Posterior cingulate gyrus (tissue), 11 donors: ENCODE measurements at regions of chr7 and their contacts with region 1.

Region 1: DNA sequence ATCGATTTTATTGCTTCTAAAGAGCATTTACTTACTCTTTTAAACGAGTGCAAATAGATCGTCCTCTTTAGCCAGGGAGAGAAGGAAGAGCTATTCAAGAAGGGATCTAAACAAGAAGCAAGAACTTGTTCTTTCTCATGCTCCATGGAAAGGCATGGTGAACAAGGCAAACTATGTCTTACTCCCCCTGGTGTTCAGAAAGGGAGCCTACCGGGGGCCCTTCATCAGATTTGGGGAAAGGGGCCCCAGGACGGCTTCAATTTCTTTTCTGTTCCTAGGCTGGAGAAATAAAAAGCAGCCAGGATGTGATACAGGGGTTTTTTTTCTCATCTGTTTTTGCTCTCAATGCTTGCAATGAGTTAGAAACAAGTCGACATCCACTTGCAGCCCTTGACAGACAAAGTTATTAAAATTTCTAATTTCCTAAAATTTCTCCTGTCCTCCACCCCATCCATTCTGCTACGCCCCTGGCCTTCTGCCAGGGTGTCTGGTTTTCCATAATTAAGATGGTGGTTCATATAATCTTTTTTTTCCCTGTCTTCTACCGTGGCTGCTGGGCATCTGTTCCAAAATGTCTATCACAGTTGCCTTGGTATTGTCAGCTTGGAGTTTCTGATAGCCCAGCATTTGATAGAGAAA is 214.4 kb downstream of the CREB5 start:
- DNase-seq: no peak

Region 2: DNA sequence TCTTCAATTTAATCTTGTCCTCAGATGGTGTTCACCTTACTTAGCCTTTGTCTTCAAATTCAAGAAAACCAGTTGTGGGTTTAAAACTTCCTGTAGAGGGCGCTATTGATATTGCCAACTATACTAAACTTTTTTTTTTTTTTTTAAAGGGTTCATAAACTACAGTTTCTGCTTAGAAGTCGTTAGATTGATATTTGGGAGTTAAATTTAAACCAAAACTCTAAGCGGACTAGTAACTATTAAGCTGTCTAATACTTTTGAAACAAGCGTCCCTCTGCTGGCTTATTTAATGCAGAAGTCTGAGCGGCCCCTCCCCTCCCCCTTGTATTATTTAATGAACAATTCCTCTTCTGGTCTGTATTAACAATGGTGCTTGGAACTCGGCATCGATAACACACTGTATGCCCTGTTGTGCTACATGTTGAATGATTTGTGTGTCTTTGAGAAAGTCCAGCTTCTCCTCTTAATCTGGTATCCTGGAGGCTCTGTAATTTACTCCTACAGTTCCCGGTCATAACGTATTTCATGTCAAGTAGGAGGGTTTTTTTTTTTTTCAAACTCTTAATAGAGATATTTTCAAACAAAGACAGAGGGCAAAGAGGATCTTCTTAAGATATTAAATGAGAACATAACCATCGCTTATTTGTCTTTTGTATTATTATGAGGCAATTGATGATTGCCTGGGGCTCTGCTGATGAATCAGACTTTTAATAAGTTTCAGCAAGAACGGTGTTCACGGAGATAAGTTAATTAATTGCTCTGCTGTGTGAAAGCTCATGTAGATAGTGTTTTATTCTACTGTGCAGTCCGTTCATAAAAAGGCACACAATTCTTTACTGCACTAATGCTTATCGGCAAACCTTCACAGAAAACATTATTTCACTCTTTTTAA is 237.0 kb before region 1 on chr7:
- intact Hi-C with region 1: loop called (anchors 5 kb)
- DNase-seq: no peak

Region 3: DNA sequence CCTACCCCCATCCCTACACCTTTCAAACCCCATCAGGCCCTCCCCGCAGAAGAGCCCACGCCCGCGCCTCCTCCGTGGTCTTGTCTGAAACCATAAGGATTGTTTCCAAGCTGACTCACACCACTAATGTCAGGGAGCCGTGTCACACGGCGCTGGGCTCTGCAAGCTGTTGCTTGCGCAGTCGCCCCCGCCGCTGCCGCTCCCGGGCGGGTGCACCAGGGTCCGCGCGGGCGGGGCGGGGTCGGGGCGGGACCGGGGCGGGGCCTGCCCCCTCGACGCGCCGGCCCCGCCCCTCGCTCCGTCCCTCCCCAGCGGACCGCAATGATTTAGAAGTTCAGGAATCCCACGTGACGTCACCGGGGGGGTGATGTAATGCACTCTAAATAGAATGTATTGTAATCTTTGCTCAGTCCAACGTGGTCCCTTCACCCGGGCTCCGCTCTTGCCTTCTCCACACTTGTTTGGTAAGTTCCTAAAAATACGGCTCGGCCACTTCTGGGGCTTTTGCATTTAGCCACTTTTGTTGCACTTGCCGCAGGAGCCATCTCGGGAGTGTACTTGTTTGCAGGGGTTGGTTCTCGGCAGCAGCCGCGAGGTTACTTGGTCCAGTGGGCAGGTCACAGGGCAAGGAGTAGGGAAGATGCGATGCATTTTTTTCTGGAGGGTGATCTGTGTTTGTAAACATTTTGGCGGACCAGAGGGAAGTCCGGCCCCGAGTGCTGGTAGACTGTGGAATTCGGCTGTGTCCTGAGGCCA is 217.6 kb before region 1 on chr7:
- intact Hi-C with region 1: loop called (anchors 5 kb)
- DNase-seq: peak; percentile 82 to 99 (median 96)

Region 4: DNA sequence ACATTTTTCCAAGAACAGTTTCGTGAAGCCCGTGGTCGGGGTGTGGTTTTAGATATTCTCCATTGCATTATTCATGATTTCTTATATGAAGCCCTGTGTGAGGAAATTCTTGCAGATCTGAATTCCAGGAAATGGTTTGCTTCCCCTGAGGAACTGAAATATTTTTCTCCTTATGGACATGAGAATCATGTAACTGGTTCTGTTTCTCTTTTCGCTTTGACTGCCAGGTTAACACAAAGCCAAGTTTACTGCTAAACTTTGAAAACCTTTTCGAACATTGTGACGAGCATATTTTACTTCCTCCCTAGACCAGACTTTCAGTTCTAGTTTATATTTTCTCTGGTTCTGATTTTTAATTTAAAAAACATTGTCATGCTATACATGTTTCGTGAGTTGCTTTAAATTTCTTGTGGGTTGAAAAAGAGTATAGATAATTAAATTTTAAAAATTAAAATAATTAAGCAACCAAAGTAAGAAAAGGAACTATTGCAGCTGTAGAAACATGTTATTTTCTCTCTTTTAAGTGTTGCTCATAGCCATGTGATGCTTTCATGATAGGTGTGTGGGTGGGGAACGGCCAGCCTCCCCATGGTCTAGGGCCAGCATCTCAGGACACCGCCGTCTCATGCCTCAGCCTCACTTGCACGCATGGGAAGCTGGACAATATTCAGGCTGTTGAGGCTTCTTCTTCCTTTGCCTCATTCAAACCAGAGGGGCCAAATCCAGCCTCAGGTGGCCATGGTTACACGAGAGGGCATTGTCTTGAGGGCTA is 117.3 kb before region 1 on chr7:
- intact Hi-C with region 1: loop called (anchors 10 kb)
- DNase-seq: no peak